GM12878 (cell line): ENCODE measurements at regions of chr19 and their contacts with region 1.

Region 1: DNA sequence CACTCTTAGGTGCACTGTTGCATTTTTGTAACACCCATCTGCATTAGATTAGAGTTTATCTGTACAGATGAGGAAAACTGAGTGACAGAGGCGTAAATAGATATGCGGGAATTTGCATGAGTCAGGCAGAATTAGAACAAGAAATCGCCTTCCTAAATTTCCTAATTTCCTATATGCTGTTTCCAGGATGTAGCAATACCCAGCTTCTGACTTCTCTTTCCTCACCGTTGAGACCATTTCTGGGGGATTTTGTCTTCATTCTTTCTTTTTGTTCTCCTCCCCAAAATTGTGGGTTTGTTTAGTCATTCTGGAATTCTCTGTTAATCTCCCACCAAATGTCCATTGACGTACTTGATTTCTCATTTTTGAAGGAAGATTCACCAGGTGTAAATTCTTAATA is 10.6 kb upstream of the ZNF792 start:
- DNase-seq: no peak
- ATAC-seq: no peak
- H3K4me3 ChIP-seq: no peak overlapping the region
- H3K27ac ChIP-seq: no peak overlapping the region
- H3K4me1 ChIP-seq: peaks cover 8% of the 10 kb centered on the region
- H3K27me3 ChIP-seq: no peaks in the 10 kb centered on the region
- CTCF ChIP-seq: no peak
- EP300 ChIP-seq: no peak
- POLR2A ChIP-seq: no peak
- RAD21 ChIP-seq: no peak

Region 2: DNA sequence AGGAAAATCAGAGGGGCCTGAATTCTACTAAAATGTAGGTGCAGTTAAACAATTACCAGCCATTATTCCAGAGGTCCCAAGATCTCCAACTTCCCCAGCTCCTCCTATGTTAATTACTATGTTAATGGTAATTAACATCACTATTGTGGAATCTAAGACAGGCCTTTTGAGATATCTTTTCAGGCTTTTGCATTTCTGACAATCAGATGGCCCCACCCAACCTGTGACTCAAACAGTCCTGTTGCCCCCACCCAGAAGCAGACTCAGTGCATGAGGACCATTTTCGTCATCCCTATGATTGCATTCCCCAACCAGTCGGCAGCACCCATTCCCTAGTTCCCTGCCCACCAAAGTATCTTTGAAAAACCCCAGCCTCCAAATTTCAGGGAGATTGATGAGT is 56.5 kb before region 1 on chr19:
- CTCF ChIA-PET with region 1: no interaction called
- POLR2A ChIA-PET with region 1: no interaction called
- RAD21 ChIA-PET with region 1: no interaction called
- SMC1A ChIA-PET with region 1: no interaction called
- in situ Hi-C with region 1: no loop called
- intact Hi-C with region 1: no loop called
- DNase-seq: no peak
- ATAC-seq: no peak
- H3K4me3 ChIP-seq: no peak overlapping the region
- H3K27ac ChIP-seq: no peak overlapping the region
- H3K4me1 ChIP-seq: no peaks in the 10 kb centered on the region
- H3K27me3 ChIP-seq: no peaks in the 10 kb centered on the region
- CTCF ChIP-seq: no peak
- EP300 ChIP-seq: no peak
- POLR2A ChIP-seq: no peak
- RAD21 ChIP-seq: no peak

Region 3: GRCh38 chr19:34990578-34991192 is 16.0 kb after region 1 on chr19:
- CTCF ChIA-PET with region 1: interaction called, 26 read pairs
- POLR2A ChIA-PET with region 1: interaction called, 3 read pairs
- RAD21 ChIA-PET with region 1: interaction called, 9 read pairs
- SMC1A ChIA-PET with region 1: interaction called, 17 read pairs
- in situ Hi-C with region 1: no loop called
- intact Hi-C with region 1: no loop called
- DNase-seq: peak; percentile 69
- ATAC-seq: peak; percentile 80
- H3K4me3 ChIP-seq: no peak overlapping the region
- H3K27ac ChIP-seq: peak overlapping the region; percentile 57
- H3K4me1 ChIP-seq: peaks cover 4% of the 10 kb centered on the region; the same call in 1 of the 2 replicates
- H3K27me3 ChIP-seq: no peaks in the 10 kb centered on the region
- CTCF ChIP-seq: no peak
- EP300 ChIP-seq: peak; percentile 64 to 79; a peak in 2 of 4 replicates
- POLR2A ChIP-seq: no peak
- RAD21 ChIP-seq: no peak

Region 4: DNA sequence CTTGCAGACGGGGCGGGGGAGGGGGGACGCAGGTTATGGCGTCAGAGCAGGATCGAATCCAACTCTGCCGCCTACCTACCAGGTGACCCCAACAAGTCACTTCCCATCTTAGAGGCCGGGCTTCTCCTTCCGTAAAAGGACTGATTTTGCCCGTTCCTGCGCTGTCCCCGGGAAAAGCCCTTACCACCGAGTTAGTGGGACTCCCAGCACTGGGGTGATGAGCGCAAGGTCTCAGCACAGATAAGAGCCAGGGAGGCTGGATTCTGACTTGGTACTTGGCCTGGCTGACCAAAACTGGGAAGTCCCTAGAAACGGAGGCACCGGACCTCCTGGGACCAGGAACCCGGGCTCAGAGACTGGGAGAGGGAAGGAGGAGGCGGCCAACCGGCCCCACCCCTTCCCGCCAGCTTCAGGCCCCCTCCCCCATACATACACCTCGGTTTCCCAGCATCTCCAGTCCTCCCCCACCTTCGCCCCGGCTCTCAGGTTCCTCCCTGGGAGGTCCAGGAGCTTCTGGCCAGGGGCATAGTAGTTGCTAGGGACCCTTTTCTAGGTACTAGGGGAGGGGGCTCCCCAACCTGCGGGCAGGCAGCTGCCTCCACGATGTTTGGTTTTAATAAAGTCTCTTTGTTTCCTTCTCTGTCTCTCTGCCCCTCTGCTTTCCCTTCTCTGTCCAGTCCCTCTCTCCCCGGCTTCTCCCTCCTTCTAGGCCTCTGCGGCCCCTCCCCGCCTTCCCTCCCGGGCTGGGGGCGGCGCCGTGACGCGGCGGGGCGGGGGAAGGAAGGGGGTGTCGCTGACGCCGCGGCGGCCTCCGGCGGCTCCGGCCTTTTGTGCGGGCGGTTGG is 25.1 kb after region 1 on chr19 and contains the start of gene GRAMD1A:
- CTCF ChIA-PET with region 1: interaction called, 10 read pairs
- POLR2A ChIA-PET with region 1: interaction called, 4 read pairs
- RAD21 ChIA-PET with region 1: interaction called, 8 read pairs
- SMC1A ChIA-PET with region 1: interaction called, 4 read pairs
- in situ Hi-C with region 1: no loop called
- intact Hi-C with region 1: no loop called
- DNase-seq: no peak
- ATAC-seq: peak; percentile 72
- H3K4me3 ChIP-seq: peak within 1 kb of the TSS; percentile 95
- H3K27ac ChIP-seq: peak within 1 kb of the TSS; percentile 86
- H3K4me1 ChIP-seq: peaks cover 43% of the 10 kb centered on the region
- H3K27me3 ChIP-seq: no peaks in the 10 kb centered on the region
- CTCF ChIP-seq: no peak
- EP300 ChIP-seq: peak in 1 of 2 experiments; percentile 21; a peak in 1 of 4 replicates
- POLR2A ChIP-seq: no peak
- RAD21 ChIP-seq: no peak
- polyA plus RNA-seq, gene GRAMD1A: 0.79 to 2.0 TPM

Region 5: DNA sequence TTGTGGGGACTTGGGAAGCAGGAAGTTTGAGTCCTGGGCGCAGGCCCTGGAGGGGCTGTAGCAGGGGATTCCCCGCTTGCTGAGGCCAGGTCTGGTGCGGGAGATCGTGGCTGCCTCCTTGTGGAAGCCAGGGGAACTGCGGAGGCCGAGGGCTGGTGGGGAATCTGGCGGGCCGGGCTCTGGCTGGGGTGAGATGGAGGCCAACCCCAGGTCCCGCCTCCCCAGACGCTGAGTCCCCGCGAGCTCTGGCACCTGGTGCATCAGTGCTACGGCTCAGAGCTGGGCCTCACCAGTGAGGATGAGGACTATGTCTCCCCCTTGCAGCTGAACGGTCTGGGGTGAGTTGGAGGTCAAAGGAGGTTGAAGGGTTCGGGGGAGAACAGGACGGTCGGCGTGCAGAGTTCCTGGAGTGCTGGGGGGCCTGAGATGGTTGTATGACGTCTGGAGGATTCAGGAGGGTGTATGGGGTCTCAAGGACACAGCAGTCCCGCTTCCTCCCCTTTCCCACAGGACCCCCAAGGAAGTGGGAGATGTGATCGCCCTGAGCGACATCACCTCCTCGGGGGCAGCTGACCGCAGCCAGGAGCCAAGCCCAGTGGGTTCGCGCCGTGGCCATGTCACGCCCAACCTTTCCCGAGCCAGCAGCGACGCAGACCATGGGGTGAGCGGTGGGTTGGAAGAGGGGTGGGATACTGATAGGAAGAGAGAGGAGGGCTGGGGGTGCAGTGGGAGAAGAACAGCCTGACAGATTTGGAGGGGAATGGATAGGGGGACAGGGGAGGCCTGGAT is 38.6 kb after region 1 on chr19:
- CTCF ChIA-PET with region 1: interaction called, 62 read pairs
- POLR2A ChIA-PET with region 1: no interaction called
- RAD21 ChIA-PET with region 1: interaction called, 8 read pairs
- SMC1A ChIA-PET with region 1: interaction called, 17 read pairs
- in situ Hi-C with region 1: loop called (anchors 5 kb)
- intact Hi-C with region 1: loop called (anchors 1 kb)
- DNase-seq: no peak
- ATAC-seq: peak; percentile 93
- H3K4me3 ChIP-seq: no peak overlapping the region
- H3K27ac ChIP-seq: no peak overlapping the region
- H3K4me1 ChIP-seq: peaks cover 11% of the 10 kb centered on the region
- H3K27me3 ChIP-seq: no peaks in the 10 kb centered on the region
- CTCF ChIP-seq: peak; percentile 95 to 100 (median 97)
- EP300 ChIP-seq: no peak
- POLR2A ChIP-seq: peak; percentile 54
- RAD21 ChIP-seq: peak; percentile 94

Region 6: DNA sequence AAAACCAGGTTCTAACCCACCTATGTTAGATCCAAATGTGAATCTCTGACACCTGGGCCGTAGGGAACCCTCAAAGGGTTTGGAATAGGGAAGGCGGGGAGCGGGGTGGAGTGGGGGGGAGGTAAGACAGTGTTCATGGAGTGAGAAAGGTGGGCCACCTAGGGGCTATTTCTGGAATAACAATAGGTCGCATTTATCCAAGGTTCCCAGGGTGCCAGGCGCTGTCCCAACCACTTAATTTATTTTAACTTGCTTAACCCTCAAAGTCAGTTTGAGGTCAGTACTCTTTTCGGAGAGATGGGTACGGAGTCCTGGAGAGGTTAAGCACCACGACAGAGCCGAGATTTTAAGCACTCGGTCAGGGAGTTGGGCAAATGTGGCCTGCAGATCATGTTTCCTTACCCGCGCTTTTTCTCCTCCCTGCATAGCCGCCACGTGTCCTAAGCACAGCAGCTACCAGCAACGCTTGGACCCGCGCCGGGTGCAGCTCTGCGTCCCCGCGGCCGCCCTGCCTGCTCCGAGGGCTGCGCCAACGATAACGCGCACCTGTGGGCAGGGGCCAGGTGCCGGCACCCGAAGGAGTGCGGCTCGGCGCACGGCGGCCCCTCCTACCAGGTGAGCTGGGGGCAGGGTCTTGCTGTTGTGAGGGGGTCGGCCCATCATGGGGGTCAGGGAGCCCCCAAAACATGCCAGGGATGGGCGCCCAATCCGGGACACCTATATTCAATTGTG is 116.0 kb after region 1 on chr19:
- CTCF ChIA-PET with region 1: interaction called, 3 read pairs
- POLR2A ChIA-PET with region 1: no interaction called
- RAD21 ChIA-PET with region 1: no interaction called
- SMC1A ChIA-PET with region 1: interaction called, 3 read pairs
- in situ Hi-C with region 1: no loop called
- intact Hi-C with region 1: loop called (anchors 2 kb)
- DNase-seq: no peak
- ATAC-seq: peak; percentile 90
- H3K4me3 ChIP-seq: no peak overlapping the region
- H3K27ac ChIP-seq: no peak overlapping the region
- H3K4me1 ChIP-seq: peaks cover 12% of the 10 kb centered on the region
- H3K27me3 ChIP-seq: no peaks in the 10 kb centered on the region; a peak in 1 of 4 replicates
- CTCF ChIP-seq: peak; percentile 55 to 59 (median 56)
- EP300 ChIP-seq: no peak
- POLR2A ChIP-seq: no peak
- RAD21 ChIP-seq: peak; percentile 62

Region 7: DNA sequence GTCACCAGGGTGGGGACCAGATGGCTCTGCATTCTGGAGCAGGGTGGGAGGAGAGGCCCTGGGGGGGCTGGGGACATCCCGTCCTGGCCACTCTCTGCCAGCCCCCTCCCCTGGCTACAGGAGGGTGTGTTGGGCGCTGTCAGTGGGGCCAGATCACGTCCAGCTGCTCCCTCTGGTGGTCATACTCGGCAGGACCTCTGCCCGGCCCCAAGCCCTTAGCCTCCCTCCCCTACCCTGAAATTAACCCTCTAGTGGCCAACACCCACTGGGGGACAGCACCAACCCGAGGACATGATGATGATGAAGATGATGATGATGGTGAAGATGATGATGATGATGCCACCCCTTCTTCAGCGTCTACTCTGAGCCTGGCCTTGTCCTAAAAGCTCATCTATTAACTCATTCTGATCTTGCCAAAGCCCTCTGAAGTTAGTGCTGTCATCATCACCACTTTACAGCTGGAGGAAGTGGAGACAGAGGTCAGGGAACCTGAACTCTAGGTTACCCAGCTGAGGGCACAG is 160.8 kb after region 1 on chr19:
- CTCF ChIA-PET with region 1: no interaction called
- POLR2A ChIA-PET with region 1: no interaction called
- RAD21 ChIA-PET with region 1: no interaction called
- SMC1A ChIA-PET with region 1: no interaction called
- in situ Hi-C with region 1: no loop called
- intact Hi-C with region 1: loop called (anchors 10 kb)
- DNase-seq: no peak
- ATAC-seq: peak; percentile 97
- H3K4me3 ChIP-seq: no peak overlapping the region
- H3K27ac ChIP-seq: no peak overlapping the region
- H3K4me1 ChIP-seq: peaks cover 4% of the 10 kb centered on the region; the same call in 1 of the 2 replicates
- H3K27me3 ChIP-seq: no peaks in the 10 kb centered on the region
- CTCF ChIP-seq: peak; percentile 78 to 92 (median 84)
- EP300 ChIP-seq: no peak
- POLR2A ChIP-seq: no peak
- RAD21 ChIP-seq: peak; percentile 51

Region 8: GRCh38 chr19:35216871-35217648 is 242.4 kb after region 1 on chr19:
- CTCF ChIA-PET with region 1: no interaction called
- POLR2A ChIA-PET with region 1: no interaction called
- RAD21 ChIA-PET with region 1: no interaction called
- SMC1A ChIA-PET with region 1: no interaction called
- in situ Hi-C with region 1: no loop called
- intact Hi-C with region 1: no loop called
- DNase-seq: no peak
- ATAC-seq: peak; percentile 24
- H3K4me3 ChIP-seq: no peak overlapping the region
- H3K27ac ChIP-seq: no peak overlapping the region
- H3K4me1 ChIP-seq: peaks cover 28% of the 10 kb centered on the region
- H3K27me3 ChIP-seq: no peaks in the 10 kb centered on the region
- CTCF ChIP-seq: peak; percentile 20 to 46 (median 41); a peak in 3 of 6 replicates
- EP300 ChIP-seq: no peak
- POLR2A ChIP-seq: no peak
- RAD21 ChIP-seq: peak; percentile 60